ENCODE measurements at regions of chr12 and their contacts with region 1.

Region 1: DNA sequence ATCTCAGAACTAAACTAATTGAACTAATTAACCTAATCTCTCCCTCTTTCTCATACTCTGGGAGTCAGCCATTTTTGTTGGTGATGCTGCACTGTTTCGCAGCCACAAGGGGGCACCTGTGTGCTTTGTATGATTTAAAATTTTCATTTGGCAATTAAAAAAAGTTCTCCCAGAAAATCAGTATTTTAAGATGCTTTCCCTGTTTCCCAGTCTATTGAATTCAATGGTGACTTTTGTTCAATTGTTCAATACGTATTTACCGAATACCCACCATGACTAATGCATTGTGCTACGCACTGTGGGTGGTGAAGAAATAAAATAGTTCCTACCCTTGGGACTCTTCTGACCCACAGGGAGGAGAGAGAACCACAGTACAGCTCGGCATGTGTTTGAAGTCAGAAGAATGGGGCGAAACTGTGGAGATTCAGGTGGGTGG is 63.7 kb downstream of the ZNF664 start:
- DNase-seq: no peak
- H3K4me3 ChIP-seq: no peak overlapping the region
- CTCF ChIP-seq: peak in 1 of 3 donors; percentile 60
- POLR2A ChIP-seq: no peak

Region 2: DNA sequence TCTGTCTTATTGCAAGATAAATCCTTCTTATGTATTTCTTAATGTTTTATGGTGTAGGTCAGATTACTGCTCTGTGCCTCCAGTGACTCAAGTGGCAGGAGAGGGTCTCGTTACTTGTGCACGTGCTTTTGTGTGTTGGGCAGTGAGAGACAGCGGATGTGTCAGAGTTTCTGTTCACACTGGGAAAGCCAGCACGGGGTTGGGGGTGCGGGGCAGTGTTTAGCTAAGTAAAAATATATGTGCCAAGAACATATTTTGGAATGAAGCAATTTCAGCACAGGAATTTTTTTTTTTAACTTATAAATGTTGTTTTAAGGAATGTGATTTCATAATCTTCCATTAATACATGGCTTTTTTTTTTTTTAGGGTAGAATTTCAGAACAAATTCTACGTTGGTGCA is 279.1 kb before region 1 on chr12:
- intact Hi-C with region 1: no loop called
- DNase-seq: peak in 1 of 2 donors; percentile 82
- H3K4me3 ChIP-seq: no peak overlapping the region
- CTCF ChIP-seq: no peak
- POLR2A ChIP-seq: no peak

Region 3: DNA sequence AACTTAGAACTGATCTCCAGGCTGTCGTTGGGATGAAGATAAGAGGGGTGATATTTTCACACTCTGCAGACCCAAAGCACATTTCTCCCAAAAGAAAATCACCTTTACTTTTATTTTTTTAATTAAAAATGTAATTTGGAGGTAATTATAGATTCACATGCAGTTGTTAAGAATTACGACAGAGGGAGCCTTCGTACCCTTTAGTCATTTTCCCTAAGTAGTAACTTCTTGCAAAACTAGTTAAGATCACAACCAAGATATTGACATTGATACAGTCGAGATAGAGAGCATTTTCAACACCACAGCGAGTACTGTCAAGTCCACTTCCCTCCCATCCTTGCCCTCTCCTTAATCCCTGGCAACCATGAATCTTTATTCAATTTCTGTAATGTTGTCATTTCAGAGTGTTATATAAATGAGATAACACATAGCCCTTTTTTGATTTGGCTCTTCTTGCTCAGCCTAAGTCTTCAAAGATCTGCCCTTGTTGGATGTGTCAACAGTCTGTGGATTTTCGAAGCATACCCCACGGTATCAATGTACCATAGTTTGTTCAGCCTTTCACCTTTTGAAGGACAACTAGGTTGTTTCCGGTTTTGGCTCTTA is 235.0 kb before region 1 on chr12:
- intact Hi-C with region 1: no loop called
- DNase-seq: no peak
- H3K4me3 ChIP-seq: no peak overlapping the region
- CTCF ChIP-seq: no peak
- POLR2A ChIP-seq: no peak

Region 4: GRCh38 chr12:124321040-124321481 is 284.4 kb after region 1 on chr12:
- intact Hi-C with region 1: loop called (anchors 10 kb)
- DNase-seq: peak; percentile 43 to 93
- H3K4me3 ChIP-seq: no peak overlapping the region
- CTCF ChIP-seq: peak in 2 of 3 donors; percentile 39 to 41
- POLR2A ChIP-seq: no peak

Region 5: GRCh38 chr12:124863416-124864325 is 827.0 kb after region 1 on chr12 and contains the start of gene SCARB1:
- intact Hi-C with region 1: no loop called
- DNase-seq: peak; percentile 66 to 95
- H3K4me3 ChIP-seq: peak within 1 kb of the TSS; percentile 43
- CTCF ChIP-seq: no peak
- POLR2A ChIP-seq: no peak
- total RNA-seq, gene SCARB1: 18.6 to 41.8 (median 26.7) TPM